Endothelial cell of umbilical vein (primary cell): ENCODE measurements at regions of chr19 and their contacts with region 1.

Region 1: GRCh38 chr19:13252569-13253335 is 102.5 kb downstream of the IER2 start:
- DNase-seq: no peak
- H3K4me3 ChIP-seq: no peak overlapping the region
- H3K27ac ChIP-seq: no peak overlapping the region
- H3K4me1 ChIP-seq: peaks cover 3% of the 10 kb centered on the region
- H3K27me3 ChIP-seq: peaks cover 0 to 3% of the 10 kb centered on the region in 2 experiments
- CTCF ChIP-seq: no peak
- POLR2A ChIP-seq: no peak

Region 2: DNA sequence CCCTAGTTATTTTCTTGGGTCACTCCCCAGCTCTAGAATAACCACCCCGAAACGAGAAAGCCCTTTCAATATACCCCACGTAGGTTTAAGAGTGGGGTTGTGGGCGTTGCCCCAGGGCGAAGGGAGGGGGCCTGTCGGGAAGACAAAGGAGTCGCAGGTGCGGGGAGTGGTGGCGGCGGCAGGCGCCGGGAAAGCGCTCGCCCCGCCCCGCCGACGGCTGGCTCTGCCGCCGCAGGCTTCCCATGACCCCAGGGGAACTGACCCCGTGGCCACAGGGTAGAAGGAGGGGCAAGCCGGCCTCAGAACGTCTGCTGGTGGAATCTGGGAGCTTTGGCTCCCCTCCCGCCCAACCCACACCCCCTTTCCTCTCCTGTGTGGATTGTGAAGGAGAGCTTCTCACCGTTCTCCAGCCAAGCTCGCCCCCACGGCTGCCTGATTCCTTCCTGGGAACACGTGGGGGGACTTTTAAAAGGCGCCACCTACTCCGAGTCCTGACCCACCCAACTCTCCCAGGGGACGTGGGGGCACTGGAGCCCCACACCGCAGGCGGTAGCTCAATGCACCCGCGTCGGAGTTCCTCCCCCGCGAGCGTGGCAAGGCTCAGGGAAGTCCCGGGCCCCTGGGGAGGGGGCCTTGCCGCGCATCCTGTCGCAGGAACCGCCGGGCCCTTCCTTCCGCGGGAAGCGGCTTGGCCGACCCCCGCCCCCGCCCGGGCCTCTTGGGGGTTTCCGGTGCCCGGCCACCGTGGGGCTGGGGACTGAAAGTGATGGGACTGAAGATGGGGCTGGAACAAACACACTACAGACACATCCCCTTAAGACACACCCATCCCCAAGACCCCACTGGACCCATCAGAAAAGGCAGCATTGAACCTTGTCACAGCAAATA is 97.0 kb before region 1 on chr19:
- CTCF ChIA-PET with region 1: interaction called, 4 read pairs
- POLR2A ChIA-PET with region 1: no interaction called
- dilution Hi-C with region 1: no loop called
- intact Hi-C with region 1: loop called (anchors 1 kb)
- DNase-seq: peak; percentile 72
- H3K4me3 ChIP-seq: peak overlapping the region; percentile 62 to 97 (median 67)
- H3K27ac ChIP-seq: peak overlapping the region; percentile 96
- H3K4me1 ChIP-seq: peaks cover 27% of the 10 kb centered on the region
- H3K27me3 ChIP-seq: no peaks in the 10 kb centered on the region
- CTCF ChIP-seq: no peak
- POLR2A ChIP-seq: no peak

Region 3: GRCh38 chr19:13303381-13304129 is 50.8 kb after region 1 on chr19:
- CTCF ChIA-PET with region 1: no interaction called
- POLR2A ChIA-PET with region 1: no interaction called
- dilution Hi-C with region 1: no loop called
- intact Hi-C with region 1: no loop called
- DNase-seq: no peak
- H3K4me3 ChIP-seq: no peak overlapping the region
- H3K27ac ChIP-seq: no peak overlapping the region
- H3K4me1 ChIP-seq: no peaks in the 10 kb centered on the region
- H3K27me3 ChIP-seq: peaks cover 0 to 2% of the 10 kb centered on the region in 2 experiments
- CTCF ChIP-seq: no peak
- POLR2A ChIP-seq: no peak